ENCODE measurements at regions of chr5 and their contacts with region 1.

Region 1: DNA sequence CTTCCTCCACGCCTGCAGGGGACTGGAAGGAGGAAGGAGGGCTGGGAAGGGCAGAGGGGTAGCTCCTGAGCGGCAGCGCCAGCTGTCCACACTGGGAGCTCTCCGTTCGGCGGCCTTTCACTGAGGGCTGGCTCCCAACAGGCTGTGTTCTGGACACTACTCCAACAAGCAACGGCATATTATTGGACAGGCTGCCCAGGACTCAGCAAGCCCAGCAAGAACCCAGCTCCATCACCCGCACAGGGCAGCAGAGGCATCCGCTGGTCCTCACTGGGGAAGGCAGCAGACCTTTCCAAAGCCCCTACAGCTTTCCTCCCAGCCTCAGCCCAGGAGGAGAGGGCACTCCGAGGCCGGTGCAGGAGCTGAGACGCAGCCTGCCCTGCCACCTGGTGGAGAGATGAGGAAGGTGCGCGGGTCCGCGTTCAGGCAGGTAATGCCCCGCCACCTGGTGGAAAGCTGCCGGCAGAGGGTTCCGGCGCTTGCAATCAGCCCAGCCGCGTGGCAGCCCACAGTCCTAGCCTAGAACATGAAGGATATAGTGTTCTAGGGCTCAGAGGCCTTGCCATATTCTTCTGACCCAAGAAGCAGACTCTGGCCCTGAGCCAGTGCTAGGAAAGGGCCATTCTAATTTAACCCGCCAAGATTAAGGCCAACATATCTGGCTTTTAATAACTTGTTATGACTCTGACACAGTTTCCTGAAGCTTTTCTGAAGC is 74.4 kb downstream of the NRG2 start:
- DNase-seq: peak; percentile 15
- H3K4me3 ChIP-seq: no peak overlapping the region
- H3K27ac ChIP-seq: no peak overlapping the region
- H3K27me3 ChIP-seq: peaks cover 16% of the 10 kb centered on the region
- CTCF ChIP-seq: peak; percentile 98

Region 2: GRCh38 chr5:139774980-139775661 is 193.6 kb before region 1 on chr5:
- CTCF ChIA-PET with region 1: interaction called, 33 read pairs
- POLR2A ChIA-PET with region 1: no interaction called
- DNase-seq: no peak
- H3K4me3 ChIP-seq: no peak overlapping the region
- H3K27ac ChIP-seq: no peak overlapping the region
- H3K27me3 ChIP-seq: peaks cover 30% of the 10 kb centered on the region
- CTCF ChIP-seq: peak; percentile 80

Region 3: DNA sequence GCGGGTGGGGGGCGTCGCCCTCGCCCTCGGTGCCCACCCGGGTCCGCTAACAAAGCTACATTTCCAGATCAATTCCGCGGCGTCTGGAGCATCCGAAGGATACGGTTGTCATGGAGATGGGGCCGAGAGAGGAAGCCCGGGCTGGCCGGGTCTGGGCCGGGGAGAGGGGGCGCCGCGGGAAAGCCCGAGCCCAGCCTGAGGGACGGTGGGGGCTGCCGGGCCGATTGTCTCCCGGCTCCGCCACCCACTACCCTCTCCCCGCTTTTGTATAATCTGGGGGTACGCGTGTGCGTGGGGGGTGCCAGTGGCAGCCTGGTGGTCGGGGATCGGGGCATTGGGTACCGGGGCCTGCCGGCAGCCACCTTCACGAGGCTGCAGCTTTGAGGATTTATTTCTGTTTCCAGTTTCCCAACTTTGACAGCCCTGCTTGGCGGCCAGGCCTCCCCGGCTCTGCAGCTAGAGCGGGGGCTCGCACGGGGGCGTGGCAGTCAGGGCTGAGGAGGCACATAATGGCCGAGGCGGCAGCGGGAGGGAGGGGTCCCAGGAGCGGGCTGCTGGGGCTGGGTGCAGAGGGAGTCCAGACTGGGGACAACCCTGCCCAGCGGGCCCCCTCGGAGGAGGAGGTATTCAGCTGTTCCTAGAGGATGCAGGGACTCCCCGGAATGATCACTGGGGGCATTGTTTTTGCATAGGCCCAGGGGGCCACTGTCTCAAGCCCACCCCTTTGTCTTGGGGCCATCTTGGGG is 172.5 kb before region 1 on chr5:
- CTCF ChIA-PET with region 1: interaction called, 40 read pairs
- POLR2A ChIA-PET with region 1: no interaction called
- DNase-seq: no peak
- H3K4me3 ChIP-seq: no peak overlapping the region
- H3K27ac ChIP-seq: no peak overlapping the region
- H3K27me3 ChIP-seq: peaks cover 73% of the 10 kb centered on the region
- CTCF ChIP-seq: no peak

Region 4: GRCh38 chr5:139955053-139955605 is 13.6 kb before region 1 on chr5:
- CTCF ChIA-PET with region 1: interaction called, 23 read pairs
- POLR2A ChIA-PET with region 1: no interaction called
- DNase-seq: no peak
- H3K4me3 ChIP-seq: no peak overlapping the region
- H3K27ac ChIP-seq: no peak overlapping the region
- H3K27me3 ChIP-seq: peaks cover 4% of the 10 kb centered on the region
- CTCF ChIP-seq: no peak

Region 5: DNA sequence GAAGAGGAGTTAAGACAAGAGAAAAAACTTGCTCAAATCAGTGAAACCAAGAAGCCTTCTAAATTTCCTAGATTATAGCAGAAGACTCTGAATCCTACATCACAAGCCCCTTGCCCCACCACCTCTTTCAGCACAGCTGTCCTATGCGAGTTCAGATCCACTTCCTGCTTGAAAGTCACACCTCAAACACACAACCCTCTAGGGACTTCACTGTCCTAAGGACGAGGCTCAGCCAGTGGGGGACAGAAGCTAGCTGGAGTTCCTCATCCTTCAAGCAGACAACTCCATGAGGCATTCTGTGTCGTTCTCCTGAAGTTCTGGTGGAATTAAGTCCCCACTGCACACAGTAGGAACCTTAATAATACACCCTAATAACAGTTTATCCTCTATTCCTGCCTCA is 30.1 kb after region 1 on chr5:
- CTCF ChIA-PET with region 1: interaction called, 13 read pairs
- POLR2A ChIA-PET with region 1: no interaction called
- DNase-seq: no peak
- H3K4me3 ChIP-seq: no peak overlapping the region
- H3K27ac ChIP-seq: no peak overlapping the region
- H3K27me3 ChIP-seq: peaks cover 46% of the 10 kb centered on the region
- CTCF ChIP-seq: no peak